ENCODE measurements at regions of chr14 and their contacts with region 1.

Region 1: DNA sequence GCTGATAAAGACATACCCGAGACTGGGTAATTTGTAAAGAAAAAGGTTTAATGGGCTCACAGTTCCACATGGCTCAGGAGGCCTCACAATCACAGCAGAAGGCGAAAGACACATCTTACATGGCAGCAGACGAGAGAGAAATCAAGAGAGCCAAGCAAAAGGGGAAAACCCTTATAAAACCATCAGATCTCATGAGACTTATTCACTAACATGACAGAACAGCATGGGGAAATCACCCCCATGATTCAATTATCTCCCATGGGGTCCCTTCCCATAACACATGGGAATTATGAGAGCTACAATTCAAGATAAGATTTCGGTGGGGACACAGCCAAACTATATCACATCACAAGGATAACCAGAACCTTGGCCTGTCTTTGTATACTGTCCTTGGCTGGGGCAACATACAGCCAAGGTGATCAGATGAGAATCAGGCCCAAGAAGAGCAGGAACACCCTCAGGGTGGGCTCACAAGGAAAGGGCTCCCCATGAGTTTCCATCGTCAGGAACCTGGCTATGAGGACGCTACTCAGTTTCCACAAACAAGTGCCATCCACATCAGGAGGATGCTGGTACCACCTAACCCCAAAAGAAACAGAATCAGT is 152.7 kb downstream of the FOXN3 start:
- DNase-seq: peak in 1 of 2 donors; percentile 26
- H3K4me3 ChIP-seq: no peak overlapping the region
- CTCF ChIP-seq: no peak
- POLR2A ChIP-seq: no peak

Region 2: GRCh38 chr14:87894920-87895319 is 1369.4 kb before region 1 on chr14:
- intact Hi-C with region 1: loop called (anchors 5 kb)
- DNase-seq: no peak
- H3K4me3 ChIP-seq: no peak overlapping the region
- CTCF ChIP-seq: no peak
- POLR2A ChIP-seq: no peak